Psoas muscle (tissue), 8 donors: ENCODE measurements at regions of chr2 and their contacts with region 1.

Region 1: GRCh38 chr2:210195101-210195852 is 24.1 kb upstream of the KANSL1L start:
- DNase-seq: no peak
- ATAC-seq: peak in 2 of 4 donors; percentile 64 to 88
- H3K4me3 ChIP-seq: peak overlapping the region; percentile 51
- H3K27ac ChIP-seq: no peak overlapping the region
- H3K4me1 ChIP-seq: no peaks in the 10 kb centered on the region
- H3K27me3 ChIP-seq: no peaks in the 10 kb centered on the region
- CTCF ChIP-seq: peak; percentile 79

Region 2: DNA sequence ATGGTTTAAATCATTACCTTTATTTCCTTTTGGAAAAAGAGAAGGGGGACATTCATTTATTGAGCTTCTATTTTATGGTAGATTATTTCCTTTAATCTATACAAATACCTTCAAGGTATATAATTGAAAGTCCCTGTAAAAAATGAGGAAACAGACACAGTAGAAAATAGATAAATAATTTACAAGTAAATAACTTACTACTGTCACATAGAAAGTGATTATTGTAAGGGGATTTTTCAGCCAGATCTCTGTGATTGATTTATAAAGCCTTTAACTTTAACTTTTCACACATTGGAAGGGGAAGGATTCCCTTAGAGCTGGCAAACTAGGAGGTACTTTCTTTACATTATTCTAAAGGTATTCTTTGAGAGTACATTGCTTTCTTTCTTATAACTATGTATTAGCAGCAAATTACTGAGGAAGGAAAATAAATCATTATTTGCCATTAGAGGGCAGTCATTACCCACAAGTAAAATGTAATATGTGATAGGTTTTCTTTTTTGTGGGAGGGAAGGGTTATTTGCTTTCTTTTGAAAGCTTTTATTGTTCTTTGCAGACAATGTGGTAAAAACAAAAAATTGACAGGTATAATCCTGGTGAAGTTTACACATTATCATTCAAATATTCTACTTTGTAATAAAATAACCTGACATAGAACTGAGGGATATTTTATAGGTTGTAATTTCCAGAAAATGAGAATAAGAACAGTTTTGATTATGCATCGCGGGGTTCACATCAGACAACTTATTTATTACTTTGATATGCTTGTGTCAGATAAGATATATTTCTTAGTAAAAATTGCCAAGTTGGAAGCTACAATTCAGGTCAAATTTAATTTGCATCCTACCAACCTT is 217.7 kb before region 1 on chr2:
- intact Hi-C with region 1: loop called (anchors 1 to 2 kb)
- DNase-seq: no peak
- ATAC-seq: peak in 2 of 4 donors; percentile 44 to 76
- H3K4me3 ChIP-seq: no peak overlapping the region
- H3K27ac ChIP-seq: no peak overlapping the region
- H3K4me1 ChIP-seq: no peaks in the 10 kb centered on the region
- H3K27me3 ChIP-seq: no peaks in the 10 kb centered on the region
- CTCF ChIP-seq: peak; percentile 69

Region 3: GRCh38 chr2:210072922-210073509 is 122.3 kb before region 1 on chr2:
- intact Hi-C with region 1: loop called (anchors 10 kb)
- DNase-seq: no peak
- ATAC-seq: peak in 1 of 4 donors; percentile 37
- H3K4me3 ChIP-seq: no peak overlapping the region
- H3K27ac ChIP-seq: no peak overlapping the region
- H3K4me1 ChIP-seq: no peaks in the 10 kb centered on the region
- H3K27me3 ChIP-seq: no peaks in the 10 kb centered on the region
- CTCF ChIP-seq: peak; percentile 39

Region 4: GRCh38 chr2:210267698-210268097 is 72.4 kb after region 1 on chr2:
- intact Hi-C with region 1: no loop called
- DNase-seq: no peak
- ATAC-seq: no peak
- H3K4me3 ChIP-seq: no peak overlapping the region
- H3K27ac ChIP-seq: no peak overlapping the region
- H3K4me1 ChIP-seq: no peaks in the 10 kb centered on the region
- H3K27me3 ChIP-seq: no peaks in the 10 kb centered on the region
- CTCF ChIP-seq: no peak